Posterior vena cava (tissue), 2 donors: ENCODE measurements at regions of chr9 and their contacts with region 1.

Region 1: DNA sequence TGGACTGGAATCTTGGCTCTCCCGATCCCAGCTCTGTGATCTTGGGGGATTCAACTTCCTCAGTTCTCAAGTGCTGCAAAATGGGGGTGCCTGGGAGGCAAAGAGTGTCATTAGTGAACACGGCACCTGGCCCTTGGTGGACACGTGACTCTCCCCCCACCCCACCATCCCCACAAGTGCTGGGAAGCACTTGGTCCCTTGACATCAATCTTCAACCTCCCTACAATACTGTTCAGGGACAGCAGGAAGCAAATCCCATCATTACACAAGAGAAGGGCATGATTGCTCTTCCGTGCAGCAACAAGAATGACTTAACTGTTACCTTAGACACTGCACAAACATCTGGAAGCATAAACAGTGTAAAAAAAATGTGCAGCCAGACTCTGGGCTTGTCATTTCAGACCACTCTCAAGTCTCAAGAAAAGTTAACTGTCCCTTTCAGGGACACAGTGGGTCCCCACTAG is 61.4 kb downstream of the PSMB7 start:
- DNase-seq: peak; percentile 58

Region 2: DNA sequence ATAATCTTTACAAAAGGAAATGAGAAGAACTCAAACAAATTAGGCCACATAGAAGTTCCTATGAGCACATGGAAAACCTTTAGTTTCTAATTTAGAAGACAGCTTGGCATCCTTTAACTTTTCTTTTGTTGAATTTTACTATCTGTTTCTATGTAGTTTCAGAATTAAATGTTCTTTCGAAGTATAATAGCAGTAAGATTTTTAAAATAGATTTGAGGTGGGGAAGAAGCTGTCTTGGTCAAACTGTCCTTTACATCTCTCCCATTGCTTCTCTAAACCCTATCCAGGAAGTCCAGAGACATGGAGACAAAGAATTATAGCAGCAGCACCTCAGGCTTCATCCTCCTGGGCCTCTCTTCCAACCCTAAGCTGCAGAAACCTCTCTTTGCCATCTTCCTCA is 1630.2 kb before region 1 on chr9 and contains the start of gene OR1L4:
- intact Hi-C with region 1: loop called in 1 of 2 experiments (anchors 5 kb)
- DNase-seq: no peak
- total RNA-seq, gene OR1L4: not detected

Region 3: DNA sequence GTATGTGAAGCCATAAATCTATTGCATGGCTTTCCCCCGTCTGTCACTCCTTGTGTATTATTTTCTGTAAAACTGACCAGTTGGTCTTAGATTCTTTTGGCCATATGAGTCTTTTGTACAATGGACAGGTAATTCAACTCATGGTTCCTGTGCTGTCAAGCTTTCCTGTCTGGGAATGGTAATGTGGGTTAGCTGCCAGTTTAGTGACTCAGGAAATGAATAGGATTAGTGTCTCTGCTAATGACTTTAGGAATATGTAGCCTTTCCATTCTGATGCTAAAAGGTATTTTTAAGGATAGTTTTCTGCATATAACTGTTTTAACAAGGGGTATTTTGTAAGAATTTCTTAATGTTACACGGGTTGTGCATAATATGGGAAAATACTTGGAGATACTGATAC is 1576.0 kb after region 1 on chr9:
- intact Hi-C with region 1: loop called in 1 of 2 experiments (anchors 5 kb)
- DNase-seq: no peak